Activated CD4-positive, alpha-beta T cell treated with anti-CD3 and anti-CD28 coated beads, Interleukin-2, amount 10 ng/mL, durations not matched to agents 24 days and 14 days (primary cell): ENCODE measurements at regions of chr2 and their contacts with region 1.

Region 1: DNA sequence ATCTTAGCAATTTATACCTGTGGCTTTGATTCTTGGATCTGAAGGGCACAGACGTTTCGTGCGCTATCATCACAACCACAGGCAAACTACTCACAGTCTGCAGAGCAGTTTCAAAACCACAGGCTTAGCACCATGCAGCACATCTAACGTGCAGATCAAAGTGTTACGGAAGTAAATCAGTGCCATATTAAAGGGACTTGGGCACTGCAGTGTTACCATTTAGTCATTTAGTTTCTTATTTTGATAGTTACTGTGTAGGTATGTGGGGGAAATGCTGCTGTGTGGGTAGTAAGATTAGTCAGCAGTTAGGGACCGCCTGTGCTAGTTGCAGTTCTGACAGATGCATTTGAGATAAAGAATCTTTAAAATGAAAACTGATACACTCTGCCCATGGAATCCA is 384.0 kb downstream of the NBAS start:
- DNase-seq: peak; percentile 89
- H3K4me3 Mint-ChIP-seq: peak overlapping the region; percentile 39
- H3K27ac Mint-ChIP-seq: peak overlapping the region; percentile 35
- H3K4me1 Mint-ChIP-seq: peaks cover 36% of the 10 kb centered on the region
- H3K27me3 Mint-ChIP-seq: peaks cover 20% of the 10 kb centered on the region

Region 2: DNA sequence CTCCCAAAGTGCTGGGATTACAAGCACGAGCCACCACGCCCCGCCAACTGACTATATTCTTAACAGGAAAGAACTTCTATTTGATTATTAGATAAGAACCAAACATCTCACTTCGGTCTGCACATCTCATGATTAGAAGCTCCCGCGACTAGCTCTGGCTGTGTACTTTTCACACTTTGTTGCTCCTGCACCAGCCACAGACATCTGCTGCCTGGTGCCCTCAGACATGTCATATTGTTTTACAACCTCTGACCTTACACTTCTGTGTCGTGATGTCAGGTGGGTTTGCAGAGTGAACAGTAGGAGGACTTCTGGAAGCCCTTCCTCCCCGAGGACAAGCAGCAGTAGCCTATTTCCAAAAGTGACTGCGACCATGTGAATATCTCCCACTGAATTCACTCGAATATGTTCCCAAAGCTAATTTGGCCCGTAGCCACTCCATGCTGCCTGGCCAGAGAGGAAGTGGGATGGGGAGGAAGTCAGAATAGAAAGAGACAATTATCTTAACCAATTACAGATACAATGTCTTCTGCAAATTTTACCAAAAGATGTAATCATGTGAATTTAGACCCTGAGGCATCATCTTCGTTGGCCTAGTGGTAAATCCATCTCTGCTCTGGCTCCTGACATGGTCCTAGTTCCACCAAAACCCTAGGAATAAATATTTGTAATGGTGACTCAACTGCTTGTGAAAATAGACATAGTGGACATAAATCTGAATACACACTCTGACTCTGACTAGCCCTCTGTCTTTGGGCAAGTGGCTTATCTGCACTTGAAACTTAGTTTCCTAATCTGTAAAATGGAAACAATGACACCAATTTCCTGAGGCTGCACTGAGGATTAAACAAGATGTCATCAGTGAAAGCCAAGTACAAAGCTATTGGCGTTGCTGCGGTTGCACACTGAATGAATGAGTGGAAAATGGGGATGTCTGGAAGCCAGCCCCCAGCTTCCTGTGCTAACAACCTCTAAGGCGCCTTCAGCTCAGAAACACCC is 138.4 kb before region 1 on chr2:
- intact Hi-C with region 1: loop called (anchors 1 kb)
- DNase-seq: peak; percentile 47
- H3K4me3 Mint-ChIP-seq: no peak overlapping the region
- H3K27ac Mint-ChIP-seq: no peak overlapping the region
- H3K4me1 Mint-ChIP-seq: peaks cover 6% of the 10 kb centered on the region
- H3K27me3 Mint-ChIP-seq: peaks cover 2% of the 10 kb centered on the region

Region 3: GRCh38 chr2:15205562-15205961 is 28.5 kb after region 1 on chr2:
- intact Hi-C with region 1: loop called (anchors 1 kb)
- DNase-seq: no peak
- H3K4me3 Mint-ChIP-seq: no peak overlapping the region
- H3K27ac Mint-ChIP-seq: peak overlapping the region; percentile 30
- H3K4me1 Mint-ChIP-seq: peaks cover 16% of the 10 kb centered on the region
- H3K27me3 Mint-ChIP-seq: no peaks in the 10 kb centered on the region

Region 4: GRCh38 chr2:15311201-15311907 is 134.3 kb after region 1 on chr2:
- intact Hi-C with region 1: loop called (anchors 2 kb)
- DNase-seq: no peak
- H3K4me3 Mint-ChIP-seq: peak overlapping the region; percentile 47
- H3K27ac Mint-ChIP-seq: peak overlapping the region; percentile 59
- H3K4me1 Mint-ChIP-seq: peaks cover 52% of the 10 kb centered on the region
- H3K27me3 Mint-ChIP-seq: no peaks in the 10 kb centered on the region

Region 5: GRCh38 chr2:15560988-15561573 is 384.0 kb after region 1 on chr2 and contains the start of gene NBAS:
- intact Hi-C with region 1: loop called (anchors 2 kb)
- DNase-seq: peak; percentile 92
- H3K4me3 Mint-ChIP-seq: peak within 1 kb of the TSS; percentile 99
- H3K27ac Mint-ChIP-seq: peak within 1 kb of the TSS; percentile 94
- H3K4me1 Mint-ChIP-seq: peaks cover 31% of the 10 kb centered on the region
- H3K27me3 Mint-ChIP-seq: peaks cover 3% of the 10 kb centered on the region
- total RNA-seq, gene NBAS: 37.4 and 38.5 TPM in 2 replicates